Cardiac septum (tissue), 1 donor: ENCODE measurements at regions of chr2 and their contacts with region 1.

Region 1: GRCh38 chr2:64865073-64865830 is 123.9 kb upstream of the SLC1A4 start:
- DNase-seq: peak; percentile 85

Region 2: DNA sequence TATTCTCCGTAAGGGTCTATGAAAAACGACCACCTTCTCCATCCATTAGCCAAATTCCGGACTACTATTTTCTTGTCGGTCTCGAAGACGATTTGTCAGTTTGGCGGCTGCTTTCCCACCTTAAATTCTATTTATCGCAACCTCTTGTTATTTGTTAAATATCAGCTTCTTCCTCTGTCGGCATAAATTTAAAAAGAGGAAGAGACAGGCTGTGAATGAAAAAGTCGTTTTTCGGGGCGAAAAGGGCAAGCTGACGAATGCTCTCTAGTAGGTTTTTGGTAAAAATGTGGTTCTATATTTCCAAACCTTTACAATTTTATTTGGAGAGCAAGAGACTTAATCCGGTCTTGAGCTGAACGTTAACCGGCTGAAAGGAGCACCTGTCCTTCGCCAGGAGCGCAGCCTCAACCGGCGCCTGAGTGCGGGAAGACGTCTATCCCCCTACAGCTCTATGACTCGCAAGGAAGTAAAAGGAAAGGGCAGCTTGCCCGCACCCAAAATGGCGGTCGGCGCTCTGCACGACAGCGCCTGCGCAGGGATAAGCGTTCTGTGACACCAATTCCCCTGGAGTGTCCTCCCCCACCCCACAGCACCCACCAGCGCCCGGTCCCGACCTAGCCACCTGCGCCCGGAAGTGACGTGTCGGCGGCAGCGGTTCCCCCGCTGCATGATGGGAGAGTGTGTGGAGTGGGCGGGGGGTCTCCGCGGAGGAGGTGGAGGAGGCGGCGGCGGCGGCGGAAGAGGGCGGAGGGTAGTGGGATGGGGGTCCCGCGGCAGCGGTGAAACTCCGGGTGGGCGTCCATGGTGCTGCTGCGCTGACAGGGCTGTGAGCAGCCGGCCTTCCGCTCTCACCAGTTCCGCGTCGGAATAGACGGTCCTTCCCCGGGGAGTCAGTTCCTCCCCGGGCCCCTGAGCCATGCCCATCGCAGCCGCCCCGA is 341.3 kb before region 1 on chr2 and contains the start of gene AFTPH:
- intact Hi-C with region 1: loop called (anchors 5 kb)
- DNase-seq: peak; percentile 100
- total RNA-seq, gene AFTPH: 13.6 TPM

Region 3: GRCh38 chr2:64586883-64587481 is 278.3 kb before region 1 on chr2:
- intact Hi-C with region 1: loop called (anchors 2 kb)
- DNase-seq: no peak

Region 4: GRCh38 chr2:64609227-64609941 is 255.9 kb before region 1 on chr2:
- intact Hi-C with region 1: loop called (anchors 1 kb)
- DNase-seq: peak; percentile 86

Region 5: DNA sequence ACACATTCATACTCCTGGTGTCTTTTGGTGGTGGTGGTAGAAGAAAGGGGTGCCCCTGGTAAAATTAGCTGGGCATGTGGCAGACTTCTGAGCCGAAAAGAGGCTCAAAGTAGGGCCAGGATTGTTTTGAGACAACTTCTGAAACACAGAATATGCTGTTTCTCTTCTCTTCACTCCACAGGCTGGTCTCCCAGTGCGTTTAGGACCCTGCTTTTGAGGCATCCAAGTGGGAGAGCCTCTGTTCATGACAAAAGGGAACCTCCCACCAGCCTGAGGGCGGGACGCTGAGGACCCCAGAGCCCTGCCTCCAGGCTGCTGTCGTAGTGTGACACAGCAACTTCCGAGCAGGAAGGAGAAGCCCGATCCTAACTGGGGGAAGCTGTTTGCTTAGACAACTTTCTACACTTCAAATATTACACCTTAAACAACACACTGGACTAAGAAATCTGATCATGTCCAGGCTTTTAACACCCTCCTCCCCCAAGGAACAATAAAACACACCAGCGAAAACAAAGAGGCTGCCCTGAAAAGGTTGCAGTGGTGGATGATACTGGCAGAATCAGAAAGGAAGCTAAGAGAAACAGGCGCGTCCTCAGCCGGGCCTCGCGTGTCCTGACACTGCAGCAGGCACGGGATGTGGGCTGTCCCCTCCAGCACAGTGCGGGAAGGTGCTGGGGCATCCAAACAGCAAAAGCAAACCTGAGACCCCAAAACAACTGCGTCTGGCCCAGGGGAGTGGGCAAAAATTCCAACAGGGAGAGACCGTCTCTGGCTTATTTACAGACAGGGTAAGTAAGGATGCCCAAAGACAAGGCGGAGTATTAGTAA is 220.9 kb before region 1 on chr2:
- intact Hi-C with region 1: loop called (anchors 1 kb)
- DNase-seq: peak; percentile 91

Region 6: GRCh38 chr2:64767670-64768468 is 97.4 kb before region 1 on chr2:
- intact Hi-C with region 1: loop called (anchors 1 kb)
- DNase-seq: peak; percentile 94

Region 7: GRCh38 chr2:64831134-64831976 is 33.9 kb before region 1 on chr2:
- intact Hi-C with region 1: loop called (anchors 2 kb)
- DNase-seq: peak; percentile 92

Region 8: GRCh38 chr2:64904413-64905329 is 39.4 kb after region 1 on chr2:
- intact Hi-C with region 1: no loop called
- DNase-seq: no peak